Heart left ventricle (tissue), 16 donors: ENCODE measurements at regions of chr15 and their contacts with region 1.

Region 1: DNA sequence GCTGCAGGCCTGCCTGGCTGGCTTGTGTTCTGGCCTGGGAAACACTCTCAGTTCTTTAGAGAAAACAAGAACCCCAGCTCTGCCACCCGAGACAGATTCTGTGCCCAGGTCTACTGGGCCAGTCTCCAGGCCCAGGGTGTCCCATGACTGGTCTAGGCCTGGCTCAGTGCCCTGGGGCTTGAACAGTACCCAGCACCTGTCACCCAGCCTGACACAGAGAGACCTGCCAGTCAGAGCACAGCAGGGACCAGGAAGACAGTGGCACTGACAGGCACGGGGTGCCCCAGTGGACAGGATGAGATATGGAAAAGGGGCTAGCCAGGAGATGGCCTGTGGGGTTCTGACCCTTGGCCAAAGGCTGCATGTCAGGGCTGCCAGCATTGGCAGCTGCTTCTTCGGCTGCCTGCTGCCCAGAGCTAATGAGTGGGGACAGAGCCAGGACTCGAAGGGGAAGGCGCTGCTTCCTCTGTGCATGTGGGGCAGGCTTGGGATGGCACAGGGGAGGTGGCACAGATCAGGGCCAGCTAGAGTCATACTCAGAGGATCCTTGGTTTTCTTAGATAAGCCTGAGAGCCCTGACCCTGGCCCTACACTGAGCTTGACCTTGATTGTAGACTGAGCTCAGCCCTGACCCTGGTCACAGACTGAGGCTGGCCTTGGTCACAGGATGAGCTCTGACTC is 15.1 kb downstream of the CCDC33 start:
- DNase-seq: peak; percentile 83 to 94 (median 89)
- ATAC-seq: peak; percentile 97 to 98 (median 98)
- H3K4me3 ChIP-seq: no peak overlapping the region
- H3K27ac ChIP-seq: peak overlapping the region in 8 of 12 donors; percentile 20 to 77 (median 48)
- H3K4me1 ChIP-seq: peaks cover 0 to 31% (median 15%) of the 10 kb centered on the region in 12 donors
- H3K27me3 ChIP-seq: no peaks in the 10 kb centered on the region
- CTCF ChIP-seq: peak in 1 of 12 donors; percentile 3
- POLR2A ChIP-seq: no peak

Region 2: GRCh38 chr15:74209997-74210671 is 41.1 kb before region 1 on chr15:
- intact Hi-C with region 1: no loop called
- DNase-seq: no peak
- ATAC-seq: peak in 3 of 4 donors; percentile 8 to 68 (median 39)
- H3K4me3 ChIP-seq: no peak overlapping the region
- H3K27ac ChIP-seq: no peak overlapping the region
- H3K4me1 ChIP-seq: peaks cover 0 to 25% (median 6%) of the 10 kb centered on the region in 12 donors
- H3K27me3 ChIP-seq: no peaks in the 10 kb centered on the region
- CTCF ChIP-seq: no peak
- POLR2A ChIP-seq: no peak

Region 3: DNA sequence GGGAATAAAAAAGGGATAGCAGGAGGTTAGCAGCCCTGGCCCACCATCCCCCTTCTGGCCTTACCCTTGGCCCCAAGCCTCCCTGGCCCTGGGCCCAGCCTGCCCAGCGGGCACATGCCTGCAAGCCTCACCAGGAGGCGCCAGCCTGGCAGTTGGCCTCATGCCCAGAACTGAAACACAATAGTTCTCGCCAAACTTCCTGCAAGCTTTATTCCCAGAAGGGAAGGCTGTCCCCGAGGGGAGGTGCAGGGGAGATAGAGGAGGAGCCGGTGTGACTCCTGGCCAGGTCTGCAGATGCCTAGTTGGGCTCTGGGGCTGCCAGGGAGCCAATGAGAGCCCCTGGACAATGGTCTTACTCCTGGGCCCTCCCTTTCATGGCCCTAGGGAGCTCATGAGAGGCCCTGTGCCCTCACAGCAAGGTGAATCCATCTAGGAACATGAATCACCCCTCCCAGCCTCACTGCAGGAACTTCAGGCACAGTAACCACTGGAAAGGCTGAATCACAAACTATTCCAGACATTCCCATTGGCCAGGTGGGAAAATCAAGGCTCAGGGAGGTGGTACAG is 11.2 kb before region 1 on chr15:
- intact Hi-C with region 1: no loop called
- DNase-seq: peak; percentile 86 to 95 (median 91)
- ATAC-seq: peak; percentile 81 to 91 (median 86)
- H3K4me3 ChIP-seq: no peak overlapping the region
- H3K27ac ChIP-seq: peak overlapping the region in 11 of 12 donors; percentile 24 to 76 (median 42)
- H3K4me1 ChIP-seq: peaks cover 0 to 41% (median 28%) of the 10 kb centered on the region in 12 donors
- H3K27me3 ChIP-seq: peaks cover 0 to 2% (median 0%) of the 10 kb centered on the region in 9 donors
- CTCF ChIP-seq: peak; percentile 32 to 69 (median 52)
- POLR2A ChIP-seq: no peak

Region 4: GRCh38 chr15:74291101-74292071 is 40.1 kb after region 1 on chr15:
- intact Hi-C with region 1: loop called in 3 of 10 experiments (anchors 5 to 10 kb)
- DNase-seq: peak; percentile 84 to 89 (median 87)
- ATAC-seq: peak; percentile 72 to 92 (median 82)
- H3K4me3 ChIP-seq: no peak overlapping the region
- H3K27ac ChIP-seq: no peak overlapping the region
- H3K4me1 ChIP-seq: peaks cover 0 to 11% (median 5%) of the 10 kb centered on the region in 12 donors
- H3K27me3 ChIP-seq: peaks cover 0 to 14% (median 0%) of the 10 kb centered on the region in 9 donors
- CTCF ChIP-seq: no peak
- POLR2A ChIP-seq: no peak

Region 5: DNA sequence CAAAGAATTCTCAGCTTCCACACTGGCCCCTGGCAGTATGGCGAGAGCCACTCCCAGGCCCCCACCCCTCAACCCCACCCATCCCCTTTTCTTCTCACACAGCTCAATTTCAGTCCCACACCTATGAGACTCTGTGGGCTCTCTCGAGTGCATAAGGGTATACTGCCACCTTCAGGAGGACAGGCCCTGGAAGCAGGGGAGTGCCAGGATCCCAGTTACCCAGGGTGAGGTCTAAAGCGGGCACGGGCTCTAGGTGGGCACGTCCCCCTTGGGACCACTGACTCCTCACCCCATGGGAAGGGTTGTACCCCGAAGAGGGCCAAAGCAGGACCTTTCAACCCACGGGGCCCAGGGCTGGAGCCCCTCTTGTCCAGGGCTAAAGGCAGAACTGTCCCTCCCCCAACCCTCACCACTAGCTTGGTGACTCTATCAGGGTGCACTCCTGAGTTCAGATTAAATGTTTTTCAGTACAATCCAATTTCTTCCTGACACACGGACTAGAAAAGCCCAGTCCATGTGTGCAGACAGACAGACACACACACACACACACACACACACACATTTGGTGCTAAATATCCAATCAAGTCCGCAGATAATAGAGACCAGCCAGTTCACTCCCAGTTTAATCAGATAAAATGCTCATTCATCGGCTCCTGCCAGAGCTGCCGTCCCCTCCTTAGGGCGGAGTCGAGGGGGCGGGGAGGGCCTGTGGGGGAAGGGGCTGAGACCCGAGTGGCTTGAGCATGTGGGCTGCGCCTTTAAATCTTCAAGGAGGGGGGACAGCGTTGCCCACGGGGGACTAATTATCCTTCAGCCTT is 56.8 kb after region 1 on chr15:
- intact Hi-C with region 1: loop called in 1 of 10 experiments (anchors 10 kb)
- DNase-seq: peak in 4 of 5 donors; percentile 38 to 61 (median 50)
- ATAC-seq: peak; percentile 78 to 91 (median 82)
- H3K4me3 ChIP-seq: no peak overlapping the region
- H3K27ac ChIP-seq: no peak overlapping the region
- H3K4me1 ChIP-seq: peaks cover 0 to 12% (median 0%) of the 10 kb centered on the region in 12 donors
- H3K27me3 ChIP-seq: peaks cover 0 to 36% (median 12%) of the 10 kb centered on the region in 9 donors
- CTCF ChIP-seq: peak; percentile 47 to 78 (median 72)
- POLR2A ChIP-seq: no peak